CD4-positive, alpha-beta memory T cell (primary cell): ENCODE measurements at regions of chr1 and their contacts with region 1.

Region 1: GRCh38 chr1:115706587-115707425 is 61.7 kb downstream of the CASQ2 start:
- DNase-seq: peak in 3 of 5 donors; percentile 3 to 23 (median 19)
- H3K4me3 ChIP-seq: no peak overlapping the region
- H3K4me3 Mint-ChIP-seq: no peak overlapping the region
- H3K27ac ChIP-seq: no peak overlapping the region
- H3K27ac Mint-ChIP-seq: no peak overlapping the region
- H3K4me1 ChIP-seq: no peaks in the 10 kb centered on the region
- H3K4me1 Mint-ChIP-seq: no peaks in the 10 kb centered on the region
- H3K27me3 ChIP-seq: no peaks in the 10 kb centered on the region
- H3K27me3 Mint-ChIP-seq: peaks cover 7 to 24% of the 10 kb centered on the region in 2 donors

Region 2: GRCh38 chr1:115138968-115139367 is 567.8 kb before region 1 on chr1:
- CTCF ChIA-PET with region 1: interaction called, 14 read pairs
- POLR2A ChIA-PET with region 1: no interaction called
- intact Hi-C with region 1: no loop called
- DNase-seq: peak; percentile 42 to 57 (median 46)
- H3K4me3 ChIP-seq: no peak overlapping the region
- H3K4me3 Mint-ChIP-seq: peak overlapping the region; percentile 54 to 83 (median 62)
- H3K27ac ChIP-seq: no peak overlapping the region
- H3K27ac Mint-ChIP-seq: peak overlapping the region in 2 of 7 donors; percentile 24 to 70
- H3K4me1 ChIP-seq: peaks cover 7% of the 10 kb centered on the region
- H3K4me1 Mint-ChIP-seq: peaks cover 0 to 4% (median 1%) of the 10 kb centered on the region in 4 donors
- H3K27me3 ChIP-seq: no peaks in the 10 kb centered on the region
- H3K27me3 Mint-ChIP-seq: peaks cover 8 to 28% of the 10 kb centered on the region in 2 donors

Region 3: DNA sequence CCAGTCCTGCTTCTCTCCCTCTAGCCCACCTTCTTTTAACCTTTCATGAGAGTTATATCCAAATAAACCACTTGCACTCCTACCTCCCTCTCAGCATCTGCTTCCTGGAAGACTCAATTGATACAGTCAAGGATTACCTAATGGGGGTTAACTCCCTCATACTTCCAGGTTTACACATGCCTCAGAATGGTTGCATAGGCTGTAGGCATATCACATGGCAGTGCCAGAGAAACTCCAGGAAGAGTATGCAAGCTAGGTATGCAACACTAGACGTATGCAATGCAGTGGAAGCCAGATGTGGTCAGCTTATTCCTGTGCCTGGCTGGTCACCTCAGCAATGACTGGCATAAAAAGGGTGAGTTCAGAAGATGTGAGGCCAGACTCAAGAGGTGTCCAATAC is 97.8 kb before region 1 on chr1:
- CTCF ChIA-PET with region 1: interaction called, 37 read pairs
- POLR2A ChIA-PET with region 1: no interaction called
- intact Hi-C with region 1: loop called (anchors 1 kb)
- DNase-seq: no peak
- H3K4me3 ChIP-seq: no peak overlapping the region
- H3K4me3 Mint-ChIP-seq: no peak overlapping the region
- H3K27ac ChIP-seq: no peak overlapping the region
- H3K27ac Mint-ChIP-seq: no peak overlapping the region
- H3K4me1 ChIP-seq: no peaks in the 10 kb centered on the region
- H3K4me1 Mint-ChIP-seq: peaks cover 0 to 2% (median under 1%) of the 10 kb centered on the region in 4 donors
- H3K27me3 ChIP-seq: peaks cover 3% of the 10 kb centered on the region
- H3K27me3 Mint-ChIP-seq: peaks cover 11 to 18% of the 10 kb centered on the region in 2 donors

Region 4: DNA sequence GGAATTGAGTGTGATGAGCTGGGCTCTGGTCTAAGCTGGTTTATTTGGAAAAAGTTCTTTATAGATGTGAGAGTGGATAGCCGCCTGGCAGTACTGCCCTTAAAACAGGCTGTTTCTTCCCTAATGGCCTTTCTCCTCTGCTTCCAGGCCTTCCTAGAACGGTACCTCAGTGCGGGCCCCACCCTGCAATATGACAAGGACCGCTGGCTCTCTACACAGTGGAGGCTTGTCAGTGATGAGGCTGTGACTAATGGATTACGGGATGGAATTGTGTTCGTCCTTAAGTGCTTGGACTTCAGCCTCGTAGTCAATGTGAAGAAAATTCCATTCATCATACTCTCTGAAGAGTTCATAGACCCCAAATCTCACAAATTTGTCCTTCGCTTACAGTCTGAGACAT is 15.8 kb before region 1 on chr1:
- CTCF ChIA-PET with region 1: interaction called, 13 read pairs
- POLR2A ChIA-PET with region 1: no interaction called
- intact Hi-C with region 1: no loop called
- DNase-seq: no peak
- H3K4me3 ChIP-seq: no peak overlapping the region
- H3K4me3 Mint-ChIP-seq: no peak overlapping the region
- H3K27ac ChIP-seq: no peak overlapping the region
- H3K27ac Mint-ChIP-seq: no peak overlapping the region
- H3K4me1 ChIP-seq: no peaks in the 10 kb centered on the region
- H3K4me1 Mint-ChIP-seq: no peaks in the 10 kb centered on the region
- H3K27me3 ChIP-seq: no peaks in the 10 kb centered on the region
- H3K27me3 Mint-ChIP-seq: no peaks in the 10 kb centered on the region

Region 5: DNA sequence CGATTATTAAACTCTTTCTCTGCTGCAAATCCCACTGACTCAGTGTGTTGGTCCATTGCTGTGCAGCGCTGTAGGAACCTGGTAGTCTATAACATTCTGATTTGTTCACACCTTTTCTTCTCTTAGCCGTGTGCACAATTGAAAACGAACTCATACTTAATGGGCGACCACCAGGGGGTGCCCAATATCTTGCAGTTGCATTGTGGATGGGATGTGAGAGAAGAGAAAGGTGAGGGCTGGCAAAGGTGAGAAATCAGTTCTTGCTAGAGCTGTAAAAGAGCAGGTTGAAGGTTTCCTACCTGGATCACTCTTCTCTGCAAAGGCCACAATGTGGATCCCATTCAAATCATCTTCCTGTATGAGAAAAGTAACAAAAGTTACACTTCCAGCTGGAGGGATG is 10.7 kb after region 1 on chr1:
- CTCF ChIA-PET with region 1: interaction called, 13 read pairs
- POLR2A ChIA-PET with region 1: no interaction called
- intact Hi-C with region 1: no loop called
- DNase-seq: peak in 1 of 5 donors; percentile 12
- H3K4me3 ChIP-seq: no peak overlapping the region
- H3K4me3 Mint-ChIP-seq: no peak overlapping the region
- H3K27ac ChIP-seq: no peak overlapping the region
- H3K27ac Mint-ChIP-seq: no peak overlapping the region
- H3K4me1 ChIP-seq: no peaks in the 10 kb centered on the region
- H3K4me1 Mint-ChIP-seq: no peaks in the 10 kb centered on the region
- H3K27me3 ChIP-seq: no peaks in the 10 kb centered on the region
- H3K27me3 Mint-ChIP-seq: peaks cover 8 to 20% of the 10 kb centered on the region in 2 donors

Region 6: DNA sequence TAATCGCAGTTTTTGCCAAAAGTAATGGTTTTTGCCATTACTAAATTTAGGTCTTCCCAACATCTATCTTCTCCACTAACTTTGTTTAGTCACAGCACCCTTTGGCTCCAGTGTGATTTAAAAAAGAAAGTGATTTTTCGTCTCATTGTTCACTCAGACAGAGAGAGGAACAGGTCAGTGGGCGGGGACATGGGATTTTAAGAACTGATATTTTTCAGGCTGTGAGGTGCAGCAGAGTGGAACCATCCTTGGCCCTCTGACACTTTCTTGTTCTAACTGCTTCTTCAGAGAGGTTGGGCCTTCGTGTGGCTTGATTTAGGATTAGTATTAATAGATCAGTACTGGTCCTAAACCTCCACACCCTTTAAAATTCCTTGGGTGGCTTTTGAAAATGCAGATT is 22.9 kb after region 1 on chr1:
- CTCF ChIA-PET with region 1: interaction called, 20 read pairs
- POLR2A ChIA-PET with region 1: no interaction called
- intact Hi-C with region 1: no loop called
- DNase-seq: no peak
- H3K4me3 ChIP-seq: no peak overlapping the region
- H3K4me3 Mint-ChIP-seq: no peak overlapping the region
- H3K27ac ChIP-seq: no peak overlapping the region
- H3K27ac Mint-ChIP-seq: no peak overlapping the region
- H3K4me1 ChIP-seq: no peaks in the 10 kb centered on the region
- H3K4me1 Mint-ChIP-seq: no peaks in the 10 kb centered on the region
- H3K27me3 ChIP-seq: no peaks in the 10 kb centered on the region
- H3K27me3 Mint-ChIP-seq: peaks cover 0 to 2% of the 10 kb centered on the region in 2 donors

Region 7: DNA sequence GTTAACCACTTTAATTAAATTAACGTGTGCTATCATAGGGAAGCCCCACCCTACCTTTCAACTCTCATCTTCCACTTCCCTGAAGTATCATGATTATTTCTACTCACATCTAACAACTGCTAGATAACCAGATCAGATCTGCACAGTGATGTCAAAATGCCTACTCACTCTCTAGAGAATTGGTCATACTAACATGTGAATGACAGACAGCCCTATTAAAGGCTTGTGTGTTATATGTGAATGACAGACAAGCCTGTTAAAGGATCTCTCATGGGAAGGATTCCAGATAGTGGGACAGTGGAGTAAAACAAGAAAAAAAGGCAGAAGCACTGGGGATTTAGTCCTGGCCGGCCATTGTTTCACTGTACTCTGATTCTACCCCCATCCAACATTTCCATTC is 1491.3 kb after region 1 on chr1:
- CTCF ChIA-PET with region 1: no interaction called
- POLR2A ChIA-PET with region 1: no interaction called
- intact Hi-C with region 1: no loop called
- DNase-seq: no peak
- H3K4me3 ChIP-seq: no peak overlapping the region
- H3K4me3 Mint-ChIP-seq: no peak overlapping the region
- H3K27ac ChIP-seq: no peak overlapping the region
- H3K27ac Mint-ChIP-seq: no peak overlapping the region
- H3K4me1 ChIP-seq: no peaks in the 10 kb centered on the region
- H3K4me1 Mint-ChIP-seq: no peaks in the 10 kb centered on the region
- H3K27me3 ChIP-seq: no peaks in the 10 kb centered on the region
- H3K27me3 Mint-ChIP-seq: peaks cover 6 to 13% of the 10 kb centered on the region in 2 donors